Activated naive CD4-positive, alpha-beta T cell treated with anti-CD3 and anti-CD28 coated beads for 36 hours (primary cell): ENCODE measurements at regions of chr14 and their contacts with region 1.

Region 1: GRCh38 chr14:89954070-89955028 is at the start of gene EFCAB11:
- DNase-seq: peak; percentile 97
- H3K4me3 Mint-ChIP-seq: peak within 1 kb of the TSS; percentile 94
- H3K27ac Mint-ChIP-seq: peak within 1 kb of the TSS; percentile 89
- H3K4me1 Mint-ChIP-seq: peaks cover 37% of the 10 kb centered on the region
- H3K27me3 Mint-ChIP-seq: no peaks in the 10 kb centered on the region
- total RNA-seq, gene EFCAB11: 7.0 to 9.5 TPM

Region 2: GRCh38 chr14:88792572-88793258 is 1161.6 kb before region 1 on chr14 and contains the start of gene EML5:
- CTCF ChIA-PET with region 1: no interaction called
- intact Hi-C with region 1: loop called (anchors 5 kb)
- DNase-seq: peak; percentile 86
- H3K4me3 Mint-ChIP-seq: peak within 1 kb of the TSS; percentile 88
- H3K27ac Mint-ChIP-seq: peak within 1 kb of the TSS; percentile 71
- H3K4me1 Mint-ChIP-seq: peaks cover 18% of the 10 kb centered on the region
- H3K27me3 Mint-ChIP-seq: no peaks in the 10 kb centered on the region
- total RNA-seq, gene EML5: 3.7 to 3.8 TPM

Region 3: DNA sequence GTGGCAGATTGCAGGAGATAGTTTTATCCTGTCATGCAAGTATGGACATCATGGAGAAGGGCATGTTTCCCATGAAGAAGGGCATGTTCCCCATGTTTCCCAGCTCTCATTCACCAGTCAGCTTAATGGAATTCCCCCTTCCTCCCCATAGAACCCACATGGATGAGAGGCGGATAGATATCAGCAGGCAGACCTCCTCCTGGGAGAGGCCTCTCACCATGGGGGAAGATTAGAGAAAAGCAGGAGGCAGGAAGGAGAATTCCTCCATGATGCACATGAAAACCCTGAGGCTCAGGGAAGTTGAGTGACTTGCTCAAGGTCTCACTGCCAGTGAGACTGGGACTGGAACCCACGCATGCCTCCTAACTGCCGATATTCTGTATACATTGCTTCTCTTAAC is 444.5 kb before region 1 on chr14:
- CTCF ChIA-PET with region 1: no interaction called
- intact Hi-C with region 1: loop called (anchors 1 kb)
- DNase-seq: no peak
- H3K4me3 Mint-ChIP-seq: peak overlapping the region; percentile 79
- H3K27ac Mint-ChIP-seq: peak overlapping the region; percentile 93
- H3K4me1 Mint-ChIP-seq: peaks cover 70% of the 10 kb centered on the region
- H3K27me3 Mint-ChIP-seq: no peaks in the 10 kb centered on the region

Region 4: DNA sequence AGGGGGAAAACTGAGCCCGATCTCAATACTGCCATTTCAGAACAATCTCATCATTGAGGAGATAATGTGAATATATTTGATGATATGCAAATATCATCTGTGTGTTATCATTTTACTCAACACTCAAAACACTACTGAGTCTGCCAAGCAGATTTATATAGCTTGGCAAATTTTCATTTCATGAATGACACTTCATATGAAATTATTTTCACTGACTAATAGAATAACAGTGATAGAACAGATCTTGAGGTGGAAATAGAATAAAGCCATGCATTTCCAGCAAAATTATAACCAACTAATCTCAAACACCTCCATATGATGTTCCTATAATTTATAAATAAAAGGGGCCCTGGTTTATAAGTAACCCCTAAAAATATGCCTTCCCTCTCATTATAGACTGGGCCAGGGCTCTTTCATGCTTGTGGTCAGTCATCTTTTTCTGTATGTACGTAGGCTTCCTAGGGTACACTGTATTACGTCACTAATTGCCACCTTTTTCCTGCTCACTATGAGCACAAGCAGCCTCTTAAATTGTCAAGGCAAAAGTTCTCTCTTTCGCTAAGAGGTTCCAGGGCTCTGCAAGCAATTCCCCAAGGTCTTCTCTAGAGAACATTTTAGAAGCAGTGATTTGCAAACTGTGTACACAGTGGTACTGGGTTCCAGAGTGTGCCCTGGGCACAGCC is 340.2 kb before region 1 on chr14:
- CTCF ChIA-PET with region 1: no interaction called
- intact Hi-C with region 1: no loop called
- DNase-seq: no peak
- H3K4me3 Mint-ChIP-seq: peak overlapping the region; percentile 46
- H3K27ac Mint-ChIP-seq: peak overlapping the region; percentile 84
- H3K4me1 Mint-ChIP-seq: peaks cover 73% of the 10 kb centered on the region
- H3K27me3 Mint-ChIP-seq: no peaks in the 10 kb centered on the region

Region 5: DNA sequence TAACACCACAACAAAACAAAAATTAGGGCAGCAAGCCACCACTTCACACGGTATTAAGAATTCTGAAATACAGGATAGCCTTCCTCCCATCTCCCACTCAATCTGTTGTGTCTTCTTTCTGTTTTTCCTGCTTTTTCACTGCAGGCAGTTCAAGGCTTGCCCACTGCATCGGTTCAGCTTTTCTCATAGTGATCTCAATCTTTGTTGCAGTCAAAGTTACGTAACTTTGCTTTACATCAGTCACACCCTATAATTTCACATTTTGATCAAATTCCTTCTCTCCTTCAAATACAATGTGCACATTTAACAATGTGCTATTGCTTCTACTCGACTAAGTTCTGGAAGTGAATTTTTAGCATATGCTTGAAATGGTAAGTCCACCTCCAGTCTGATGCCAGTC is 217.5 kb before region 1 on chr14:
- CTCF ChIA-PET with region 1: no interaction called
- intact Hi-C with region 1: no loop called
- DNase-seq: no peak
- H3K4me3 Mint-ChIP-seq: no peak overlapping the region
- H3K27ac Mint-ChIP-seq: no peak overlapping the region
- H3K4me1 Mint-ChIP-seq: no peaks in the 10 kb centered on the region
- H3K27me3 Mint-ChIP-seq: no peaks in the 10 kb centered on the region

Region 6: DNA sequence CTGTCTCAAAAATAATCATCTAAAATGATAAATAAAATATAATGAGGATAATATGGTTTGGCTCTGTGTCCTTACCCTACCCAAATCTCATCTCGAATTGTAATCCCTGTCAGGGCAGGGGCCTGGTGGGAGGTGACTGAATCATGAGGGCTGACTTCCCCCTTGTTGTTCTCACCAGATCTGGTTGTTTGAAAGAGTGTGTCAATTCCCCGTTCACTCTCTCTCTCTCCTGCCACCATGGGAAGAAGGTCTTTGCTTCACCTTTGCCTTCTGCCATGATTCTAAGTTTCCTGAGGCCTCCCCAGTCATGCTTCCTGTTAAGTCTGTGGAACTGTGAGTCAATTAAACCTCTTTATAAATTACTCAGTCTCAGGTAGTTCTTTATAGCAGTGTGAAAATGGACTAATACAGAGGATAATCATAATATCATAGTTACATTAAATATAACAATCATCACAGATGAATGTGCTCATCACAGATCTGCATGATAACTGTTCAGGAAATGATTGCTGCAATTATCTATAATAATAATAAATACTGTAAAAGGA is 12.4 kb before region 1 on chr14:
- CTCF ChIA-PET with region 1: interaction called, 70 read pairs
- intact Hi-C with region 1: loop called (anchors 1 kb)
- DNase-seq: no peak
- H3K4me3 Mint-ChIP-seq: no peak overlapping the region
- H3K27ac Mint-ChIP-seq: no peak overlapping the region
- H3K4me1 Mint-ChIP-seq: peaks cover 7% of the 10 kb centered on the region
- H3K27me3 Mint-ChIP-seq: no peaks in the 10 kb centered on the region

Region 7: DNA sequence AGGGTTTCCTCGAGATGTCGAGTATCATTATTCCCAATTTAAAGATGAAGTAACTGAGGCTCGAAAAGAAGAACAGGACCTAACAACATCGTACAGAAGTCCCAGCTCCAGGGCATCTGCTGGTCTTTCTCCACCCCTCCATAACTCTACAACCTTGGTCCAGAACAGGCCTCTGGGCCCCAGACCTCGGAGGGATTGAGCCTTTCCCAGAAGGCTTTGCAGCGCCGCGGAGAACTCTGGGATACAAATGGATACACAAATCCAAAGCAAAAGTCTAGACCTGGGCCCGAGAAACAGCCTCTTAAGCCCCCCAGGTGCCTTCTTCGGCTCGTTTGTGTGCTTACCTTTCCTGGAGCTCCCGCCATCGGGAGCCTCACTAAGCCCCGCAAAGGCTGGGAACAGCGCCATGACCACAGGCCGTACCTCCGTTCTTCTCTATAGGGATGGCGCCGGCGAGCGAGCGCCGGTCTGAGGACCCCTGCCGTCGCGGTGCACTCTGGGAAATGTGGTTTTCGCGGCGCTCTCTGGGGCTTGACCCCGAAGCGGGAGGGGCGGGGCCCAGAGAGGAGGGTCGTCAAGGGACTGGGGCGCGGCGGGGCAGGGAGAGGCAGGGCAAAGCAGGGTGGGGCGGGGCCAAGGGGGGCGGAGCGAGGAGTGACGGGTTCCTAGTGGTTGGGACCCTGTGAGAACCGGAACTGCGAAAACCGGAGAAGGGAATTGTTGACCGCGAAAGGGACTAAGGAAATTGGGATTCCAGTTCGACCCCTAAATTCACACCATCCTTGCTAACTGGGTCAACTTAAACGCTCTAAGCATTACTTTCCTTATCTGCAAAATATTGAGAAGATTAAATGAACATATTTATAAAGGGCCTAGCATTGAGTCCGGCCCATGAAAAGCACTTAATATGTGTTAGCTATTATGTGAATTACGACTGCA is 377.4 kb after region 1 on chr14 and contains the start of gene NRDE2:
- CTCF ChIA-PET with region 1: no interaction called
- intact Hi-C with region 1: loop called (anchors 1 kb)
- DNase-seq: peak; percentile 98
- H3K4me3 Mint-ChIP-seq: peak within 1 kb of the TSS; percentile 90
- H3K27ac Mint-ChIP-seq: peak within 1 kb of the TSS; percentile 92
- H3K4me1 Mint-ChIP-seq: peaks cover 23% of the 10 kb centered on the region
- H3K27me3 Mint-ChIP-seq: no peaks in the 10 kb centered on the region
- total RNA-seq, gene NRDE2: 22.0 to 23.1 TPM

Region 8: DNA sequence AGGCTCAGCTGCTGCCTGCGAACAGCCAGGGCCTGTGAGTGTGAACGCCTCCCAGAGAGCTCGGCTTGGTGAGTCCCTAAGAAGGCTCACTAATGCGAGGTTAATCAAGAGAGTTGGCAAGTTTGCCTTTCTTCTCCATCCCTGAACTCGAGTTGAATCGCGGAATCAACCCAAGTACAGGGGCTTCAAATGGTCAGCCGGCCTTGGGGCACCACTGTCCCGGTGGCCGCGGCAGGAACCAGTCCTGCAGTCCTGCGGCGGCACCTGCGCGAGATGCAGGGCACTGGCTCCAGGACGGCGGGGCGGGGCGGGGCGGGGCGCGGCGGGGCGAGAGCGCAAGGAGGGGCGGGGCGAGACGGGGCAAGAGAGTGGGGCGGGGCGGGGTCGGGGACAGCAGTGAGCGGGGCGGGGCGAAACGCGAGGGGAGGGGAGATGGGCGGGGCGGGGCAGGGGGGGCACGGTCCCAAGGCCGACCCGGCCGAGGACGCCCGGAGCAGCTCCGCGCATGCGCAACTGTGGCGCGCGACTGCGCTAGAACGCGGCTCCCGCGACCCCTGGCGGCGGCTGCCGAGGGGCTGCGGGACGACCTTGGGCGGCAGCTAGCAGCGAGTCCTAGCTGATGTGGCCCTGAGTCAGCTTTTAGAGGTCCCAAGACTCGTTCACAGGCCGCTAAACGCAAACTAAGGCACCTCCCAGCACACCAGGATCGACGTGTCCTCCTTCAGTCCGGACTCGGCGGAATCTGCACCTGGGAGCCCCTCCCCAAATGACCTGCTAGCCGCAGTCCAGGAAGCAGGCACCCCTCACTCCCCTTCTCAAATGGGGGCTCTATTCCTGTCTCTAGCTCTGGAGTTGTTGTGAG is 803.9 kb after region 1 on chr14:
- CTCF ChIA-PET with region 1: no interaction called
- intact Hi-C with region 1: loop called (anchors 2 kb)
- DNase-seq: peak; percentile 92
- H3K4me3 Mint-ChIP-seq: peak overlapping the region; percentile 76
- H3K27ac Mint-ChIP-seq: peak overlapping the region; percentile 80
- H3K4me1 Mint-ChIP-seq: peaks cover 14% of the 10 kb centered on the region
- H3K27me3 Mint-ChIP-seq: peaks cover 2% of the 10 kb centered on the region

Region 9: DNA sequence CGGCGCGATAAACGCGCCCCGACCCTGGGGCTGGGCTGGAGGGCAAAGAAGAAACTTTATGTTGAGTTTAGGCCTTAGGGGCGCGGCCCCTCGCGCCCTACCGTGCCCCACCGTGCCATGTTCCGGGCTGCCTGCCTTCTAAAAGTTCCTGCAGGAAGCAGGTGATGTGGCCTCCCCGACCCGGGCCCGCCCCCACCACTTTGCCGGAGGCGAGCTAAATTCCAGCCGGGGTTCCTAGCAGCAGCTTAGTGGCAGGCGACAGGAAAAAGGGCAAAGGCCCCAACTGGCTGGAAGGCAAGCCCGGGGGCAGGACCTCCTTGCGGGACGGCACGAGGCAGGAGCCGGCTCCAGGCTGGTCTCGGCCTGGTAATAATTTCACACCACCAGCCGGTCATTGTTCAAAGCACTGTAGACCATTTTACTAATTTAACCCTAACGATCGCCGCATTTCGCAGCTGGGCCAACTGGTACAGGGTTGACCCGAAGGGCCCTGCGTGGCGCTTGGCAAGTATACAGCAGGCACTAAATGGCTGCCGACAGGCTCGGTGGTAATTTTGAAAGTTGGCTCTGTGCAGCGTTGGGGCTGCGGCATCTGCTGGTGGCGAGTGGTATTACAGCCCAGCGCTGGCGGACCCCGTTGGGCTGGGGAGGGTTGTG is 1464.2 kb after region 1 on chr14:
- CTCF ChIA-PET with region 1: no interaction called
- intact Hi-C with region 1: loop called (anchors 10 kb)
- DNase-seq: peak; percentile 84
- H3K4me3 Mint-ChIP-seq: peak overlapping the region; percentile 64
- H3K27ac Mint-ChIP-seq: peak overlapping the region; percentile 74
- H3K4me1 Mint-ChIP-seq: peaks cover 32% of the 10 kb centered on the region
- H3K27me3 Mint-ChIP-seq: no peaks in the 10 kb centered on the region